ENCODE measurements at regions of chr1 and their contacts with region 1.

Region 1: DNA sequence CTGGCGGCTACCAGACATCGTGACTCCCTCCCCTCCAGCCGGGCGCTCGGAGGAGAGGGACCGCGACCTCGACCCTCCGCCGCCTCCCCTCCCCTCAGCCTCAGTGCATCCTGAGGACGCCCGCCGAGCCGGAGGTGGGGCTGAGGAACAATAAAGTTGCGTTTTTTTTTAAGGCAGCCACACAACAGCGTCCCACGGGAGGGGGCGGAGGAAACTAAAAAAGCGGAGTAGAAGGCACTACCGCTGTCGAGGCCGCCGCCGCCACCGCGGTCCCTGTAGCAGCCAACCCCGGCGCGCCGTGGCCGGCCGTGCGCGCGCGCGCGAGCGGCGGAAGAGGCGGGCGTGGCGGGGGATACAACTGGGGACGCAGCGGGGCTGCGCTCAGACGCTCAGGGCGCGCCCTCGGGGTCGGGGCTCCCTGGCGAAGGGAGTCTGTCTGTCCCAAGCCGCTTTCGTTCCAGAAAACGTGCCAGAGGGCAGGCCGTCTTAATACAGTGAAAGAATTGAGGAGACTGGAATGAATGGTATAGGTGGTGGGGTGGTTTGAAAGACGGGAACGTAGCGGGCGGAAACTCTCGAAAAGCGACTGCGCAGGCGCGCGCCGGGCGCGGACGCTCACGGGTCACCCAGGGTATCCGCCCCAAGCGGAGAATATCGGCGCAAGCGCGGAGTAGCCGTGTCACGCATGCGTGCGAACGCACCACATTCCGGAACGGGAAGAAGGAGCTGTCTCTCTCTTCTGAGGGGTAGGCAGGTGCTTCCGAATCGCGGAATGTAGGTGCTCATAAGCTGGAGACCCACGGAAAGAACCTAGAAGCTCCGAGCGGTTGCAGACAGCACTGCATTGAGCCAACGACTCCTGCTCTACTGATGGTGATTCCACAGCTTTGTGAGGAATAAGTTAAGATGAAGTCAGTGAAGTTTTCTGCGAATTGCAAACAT is at the start of gene COP1:
- DNase-seq: peak; percentile 95
- ATAC-seq: peak; percentile 93
- H3K4me3 ChIP-seq: peak within 1 kb of the TSS; percentile 79 to 98 (median 96)
- H3K27ac ChIP-seq: peak within 1 kb of the TSS; percentile 78
- H3K4me1 ChIP-seq: peaks cover 31% of the 10 kb centered on the region
- H3K27me3 ChIP-seq: no peaks in the 10 kb centered on the region; a peak in 1 of 5 replicates
- CTCF ChIP-seq: peak; percentile 10; the same call in 1 of the 2 replicates
- EP300 ChIP-seq: 0 out of 4 replicates have a peak, but pooled peaks of 1 of the 2 experiments have one; percentile 42
- POLR2A ChIP-seq: peak; percentile 87 to 96
- RAD21 ChIP-seq: 0 out of 2 replicates have a peak, but pooled peaks have one; percentile 3
- total RNA-seq, gene COP1: 51.3 and 69.9 TPM in 2 replicates

Region 2: DNA sequence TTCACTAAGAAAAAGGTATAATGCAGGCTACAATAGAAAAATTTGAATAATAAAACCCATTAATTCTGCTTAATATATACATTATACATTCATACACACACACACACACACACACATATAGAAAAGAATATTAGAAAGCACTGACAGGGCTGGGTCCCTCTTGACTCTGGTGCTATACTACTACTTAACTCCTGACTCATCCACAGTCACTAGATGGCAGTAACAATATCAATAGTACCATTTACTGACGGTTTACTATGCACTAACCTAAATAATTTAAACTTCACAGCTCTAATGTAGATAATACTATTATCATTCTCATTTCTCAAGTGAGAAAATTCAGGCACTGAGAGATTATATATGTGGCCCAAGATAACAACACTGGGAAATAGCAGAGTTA is 87.7 kb before region 1 on chr1:
- CTCF ChIA-PET with region 1: no interaction called
- POLR2A ChIA-PET with region 1: interaction called, 9 read pairs
- in situ Hi-C with region 1: no loop called
- intact Hi-C with region 1: loop called (anchors 1 kb)
- DNase-seq: peak; percentile 39
- ATAC-seq: peak; percentile 93
- H3K4me3 ChIP-seq: no peak overlapping the region
- H3K27ac ChIP-seq: no peak overlapping the region
- H3K4me1 ChIP-seq: no peaks in the 10 kb centered on the region
- H3K27me3 ChIP-seq: no peaks in the 10 kb centered on the region
- CTCF ChIP-seq: peak; percentile 57
- EP300 ChIP-seq: no peak
- POLR2A ChIP-seq: no peak
- RAD21 ChIP-seq: peak; percentile 19; the same call in 1 of the 2 replicates

Region 3: DNA sequence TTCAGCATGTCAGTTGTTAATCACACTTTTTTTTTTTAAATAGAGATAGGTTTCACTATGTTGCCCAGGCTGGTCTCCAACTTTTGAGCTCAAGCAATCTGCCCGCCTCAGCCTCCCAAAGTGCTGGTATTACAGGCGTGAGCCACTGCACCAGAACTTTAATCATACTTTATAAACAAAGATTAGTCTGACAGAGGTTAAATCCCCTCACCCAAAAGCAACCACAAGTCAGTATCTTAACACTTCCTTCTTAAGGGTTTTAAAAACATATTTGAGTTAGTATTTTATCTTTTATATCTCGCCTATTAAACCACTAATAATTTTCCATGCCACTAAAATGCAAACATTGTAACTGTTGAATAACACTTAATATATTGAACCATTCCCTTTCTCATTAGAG is 70.3 kb before region 1 on chr1:
- CTCF ChIA-PET with region 1: no interaction called
- POLR2A ChIA-PET with region 1: interaction called, 3 read pairs
- in situ Hi-C with region 1: no loop called
- intact Hi-C with region 1: loop called (anchors 5 kb)
- DNase-seq: no peak
- ATAC-seq: no peak
- H3K4me3 ChIP-seq: no peak overlapping the region
- H3K27ac ChIP-seq: no peak overlapping the region
- H3K4me1 ChIP-seq: peaks cover 10% of the 10 kb centered on the region; the same call in 1 of the 2 replicates
- H3K27me3 ChIP-seq: no peaks in the 10 kb centered on the region
- CTCF ChIP-seq: no peak
- EP300 ChIP-seq: no peak
- POLR2A ChIP-seq: no peak
- RAD21 ChIP-seq: no peak

Region 4: DNA sequence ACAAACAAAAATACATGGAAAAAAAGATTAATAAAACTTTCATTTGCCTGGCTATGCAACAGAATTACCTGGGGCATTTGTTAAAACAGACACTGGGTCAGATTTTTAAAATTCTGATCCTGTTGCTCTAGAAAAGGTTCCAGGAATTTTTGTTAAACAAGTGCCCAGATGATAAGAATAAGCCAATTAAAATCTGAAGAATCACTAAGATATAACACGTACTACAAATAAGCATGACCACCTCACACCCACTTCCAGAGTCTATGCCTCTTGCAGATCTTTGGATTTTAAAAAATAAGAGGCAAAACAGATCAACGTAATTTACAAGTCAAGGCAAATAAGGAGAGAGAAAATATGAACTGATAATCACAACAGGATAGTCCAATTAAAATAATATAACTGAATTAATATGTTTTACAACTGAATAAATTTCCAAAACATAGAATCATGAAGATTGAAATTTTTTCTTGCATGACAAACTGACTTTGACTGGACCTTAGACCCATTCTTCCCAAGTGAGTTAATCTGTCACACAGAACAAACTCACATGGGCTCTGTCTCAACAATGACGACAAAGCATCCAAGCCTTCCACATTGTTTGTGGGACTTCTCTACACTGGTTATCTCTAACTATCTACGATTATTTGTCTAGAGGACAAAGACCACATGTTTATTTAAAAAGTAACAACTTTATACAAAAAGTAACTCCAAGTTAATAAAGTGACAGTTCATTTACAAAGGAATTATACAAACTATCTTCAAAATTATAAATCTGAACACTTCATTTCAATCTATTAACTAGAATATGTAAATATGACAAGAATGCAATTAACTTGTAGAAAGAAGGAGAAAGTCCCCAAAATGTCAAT is 57.1 kb before region 1 on chr1:
- CTCF ChIA-PET with region 1: no interaction called
- POLR2A ChIA-PET with region 1: interaction called, 8 read pairs
- in situ Hi-C with region 1: no loop called
- intact Hi-C with region 1: loop called (anchors 2 kb)
- DNase-seq: peak; percentile 96
- ATAC-seq: peak; percentile 100
- H3K4me3 ChIP-seq: peak overlapping the region in 2 of 3 experiments; percentile 37 to 52; a peak in 4 of 6 replicates
- H3K27ac ChIP-seq: peak overlapping the region; percentile 91
- H3K4me1 ChIP-seq: peaks cover 44% of the 10 kb centered on the region
- H3K27me3 ChIP-seq: no peaks in the 10 kb centered on the region
- CTCF ChIP-seq: no peak
- EP300 ChIP-seq: peak; percentile 13 to 81; a peak in 2 of 4 replicates
- POLR2A ChIP-seq: no peak
- RAD21 ChIP-seq: no peak